SK-N-SH (cell line): ENCODE measurements at regions of chr6 and their contacts with region 1.

Region 1: DNA sequence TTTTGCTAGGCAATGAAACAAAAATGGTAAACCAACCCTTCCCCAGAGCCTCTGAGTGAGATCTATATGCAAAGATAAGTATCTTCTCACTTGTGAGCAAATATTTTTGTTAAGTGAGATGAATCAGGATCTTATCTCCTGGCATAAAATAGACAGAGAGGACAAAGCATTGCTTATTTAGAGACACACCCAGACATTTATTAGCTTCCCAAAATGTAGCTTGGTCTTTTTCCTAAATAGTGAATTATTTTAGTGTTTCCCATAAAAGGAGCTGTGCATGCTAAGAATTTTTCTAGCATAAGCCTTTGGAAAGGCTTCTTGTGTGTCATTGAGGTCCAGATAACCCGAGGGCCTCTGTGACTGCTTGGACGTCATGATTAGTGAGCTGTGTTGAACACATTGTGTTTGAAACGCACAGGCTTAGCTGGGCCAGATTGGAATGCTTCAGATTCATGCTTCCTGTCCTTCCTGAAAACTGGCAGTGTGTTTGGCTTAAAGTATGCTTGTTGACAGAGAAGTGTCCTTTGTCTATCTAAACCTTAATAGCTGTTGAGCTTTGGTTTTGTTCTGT is 16.5 kb downstream of the MTHFD1L start:
- DNase-seq: peak; percentile 67
- H3K4me3 ChIP-seq: no peak overlapping the region
- H3K27ac ChIP-seq: peak overlapping the region; percentile 81 to 87
- H3K4me1 ChIP-seq: peaks cover 7 to 13% of the 10 kb centered on the region in 2 experiments; a peak in 3 of 4 replicates
- H3K27me3 ChIP-seq: no peaks in the 10 kb centered on the region
- CTCF ChIP-seq: no peak
- EP300 ChIP-seq: no peak
- RAD21 ChIP-seq: no peak

Region 2: DNA sequence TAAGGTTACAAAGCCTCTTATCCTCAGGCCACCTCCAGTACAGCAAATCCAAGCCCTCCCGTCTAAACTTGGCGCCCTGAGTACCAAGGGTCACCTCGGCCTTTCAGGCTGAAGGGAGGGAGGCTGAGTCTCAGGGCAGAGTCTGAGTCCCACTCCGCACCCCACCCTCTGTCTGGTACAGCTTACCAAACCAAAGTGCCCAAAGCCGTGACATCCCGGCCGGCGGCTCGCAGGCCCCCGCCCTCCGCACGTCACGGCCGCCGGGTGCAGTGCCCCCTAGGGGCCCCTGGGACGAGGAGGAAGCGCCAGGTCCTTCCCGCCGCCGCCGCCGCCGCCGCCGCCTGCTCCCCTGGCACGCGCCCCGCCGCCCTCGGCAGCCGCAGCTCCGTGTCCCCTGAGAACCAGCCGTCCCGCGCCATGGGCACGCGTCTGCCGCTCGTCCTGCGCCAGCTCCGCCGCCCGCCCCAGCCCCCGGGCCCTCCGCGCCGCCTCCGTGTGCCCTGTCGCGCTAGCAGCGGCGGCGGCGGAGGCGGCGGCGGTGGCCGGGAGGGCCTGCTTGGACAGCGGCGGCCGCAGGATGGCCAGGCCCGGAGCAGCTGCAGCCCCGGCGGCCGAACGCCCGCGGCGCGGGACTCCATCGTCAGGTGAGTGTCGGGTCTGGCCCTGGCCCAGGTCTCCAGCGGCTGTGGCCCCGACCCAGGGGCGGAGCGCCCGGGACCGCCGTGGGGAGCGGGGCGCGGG is 16.4 kb before region 1 on chr6 and contains the start of gene MTHFD1L:
- CTCF ChIA-PET with region 1: interaction called, 10 read pairs
- POLR2A ChIA-PET with region 1: interaction called, 3 read pairs
- DNase-seq: peak; percentile 93
- H3K4me3 ChIP-seq: peak within 1 kb of the TSS; percentile 64 to 75
- H3K27ac ChIP-seq: peak within 1 kb of the TSS; percentile 89 to 95
- H3K4me1 ChIP-seq: peaks cover 0 to 11% of the 10 kb centered on the region in 2 experiments; a peak in 2 of 4 replicates
- H3K27me3 ChIP-seq: no peaks in the 10 kb centered on the region
- CTCF ChIP-seq: peak; percentile 60
- EP300 ChIP-seq: no peak
- RAD21 ChIP-seq: 0 out of 2 replicates have a peak, but pooled peaks have one; percentile 14
- polyA plus RNA-seq, gene MTHFD1L: 36.7 and 37.0 TPM in 2 replicates

Region 3: DNA sequence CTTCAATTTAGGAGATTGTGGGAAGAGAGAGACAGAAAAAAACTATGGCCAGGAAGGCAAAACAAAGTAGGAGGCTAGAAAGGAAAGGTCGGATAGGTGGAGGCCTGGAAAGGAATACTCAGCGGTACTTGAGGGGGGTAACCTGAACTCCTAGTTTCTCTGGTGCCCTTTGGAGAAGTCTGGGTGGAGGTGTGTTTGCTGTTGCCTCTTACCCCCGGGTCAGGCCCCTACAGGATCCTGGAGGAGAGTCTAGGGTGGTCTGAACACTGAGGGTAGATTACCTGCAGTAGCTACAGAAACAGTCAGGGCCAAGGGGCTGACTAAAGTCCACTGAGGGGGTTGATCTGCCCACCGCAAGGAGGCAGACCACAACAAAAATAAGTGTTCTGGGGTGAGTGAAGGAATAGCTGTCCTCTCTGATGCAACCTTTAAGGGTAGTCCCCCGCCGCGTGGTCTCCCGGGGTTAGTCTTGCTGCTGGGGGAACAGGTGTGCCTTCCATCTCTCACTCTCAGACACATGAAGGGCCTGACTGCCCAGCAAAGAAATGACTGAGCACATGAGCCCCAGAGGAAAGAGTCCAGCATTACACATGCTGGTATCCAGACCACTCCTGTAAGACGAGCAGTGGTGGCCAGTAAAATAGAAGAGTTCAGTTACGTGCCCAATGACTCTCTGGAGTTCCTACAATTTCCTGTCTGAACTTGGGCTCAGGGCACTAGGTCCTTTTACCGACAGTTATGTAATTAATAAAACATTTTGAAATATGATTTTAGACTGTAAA is 43.0 kb after region 1 on chr6:
- CTCF ChIA-PET with region 1: no interaction called
- POLR2A ChIA-PET with region 1: no interaction called
- DNase-seq: no peak
- H3K4me3 ChIP-seq: no peak overlapping the region
- H3K27ac ChIP-seq: no peak overlapping the region; a peak in 1 of 4 replicates
- H3K4me1 ChIP-seq: no peaks in the 10 kb centered on the region
- H3K27me3 ChIP-seq: no peaks in the 10 kb centered on the region
- CTCF ChIP-seq: no peak
- EP300 ChIP-seq: no peak
- RAD21 ChIP-seq: no peak

Region 4: DNA sequence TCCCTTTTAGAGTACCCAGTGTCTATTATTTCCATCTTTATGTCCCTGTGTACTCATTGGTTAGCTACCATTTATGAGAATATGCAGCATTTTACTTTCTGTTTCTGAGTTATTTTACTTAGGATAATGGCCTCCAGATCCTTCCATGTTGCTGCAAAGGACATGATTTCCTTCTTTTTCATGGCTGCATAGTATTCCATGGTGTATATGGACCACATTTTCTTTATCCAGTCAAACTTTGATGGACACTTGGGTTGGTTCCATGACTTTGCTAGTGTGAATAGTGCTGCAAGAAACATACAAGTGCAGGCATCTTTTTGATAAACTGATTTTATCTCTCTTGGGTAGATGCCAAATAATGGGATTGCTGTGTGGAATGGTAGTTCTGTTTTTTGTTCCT is 453.9 kb after region 1 on chr6:
- CTCF ChIA-PET with region 1: interaction called, 421 read pairs
- POLR2A ChIA-PET with region 1: no interaction called
- DNase-seq: no peak
- H3K4me3 ChIP-seq: no peak overlapping the region
- H3K27ac ChIP-seq: no peak overlapping the region
- H3K4me1 ChIP-seq: no peaks in the 10 kb centered on the region; a peak in 1 of 4 replicates
- H3K27me3 ChIP-seq: no peaks in the 10 kb centered on the region
- CTCF ChIP-seq: no peak
- EP300 ChIP-seq: no peak
- RAD21 ChIP-seq: no peak